ENCODE measurements at regions of chr17 and their contacts with region 1.

Region 1: DNA sequence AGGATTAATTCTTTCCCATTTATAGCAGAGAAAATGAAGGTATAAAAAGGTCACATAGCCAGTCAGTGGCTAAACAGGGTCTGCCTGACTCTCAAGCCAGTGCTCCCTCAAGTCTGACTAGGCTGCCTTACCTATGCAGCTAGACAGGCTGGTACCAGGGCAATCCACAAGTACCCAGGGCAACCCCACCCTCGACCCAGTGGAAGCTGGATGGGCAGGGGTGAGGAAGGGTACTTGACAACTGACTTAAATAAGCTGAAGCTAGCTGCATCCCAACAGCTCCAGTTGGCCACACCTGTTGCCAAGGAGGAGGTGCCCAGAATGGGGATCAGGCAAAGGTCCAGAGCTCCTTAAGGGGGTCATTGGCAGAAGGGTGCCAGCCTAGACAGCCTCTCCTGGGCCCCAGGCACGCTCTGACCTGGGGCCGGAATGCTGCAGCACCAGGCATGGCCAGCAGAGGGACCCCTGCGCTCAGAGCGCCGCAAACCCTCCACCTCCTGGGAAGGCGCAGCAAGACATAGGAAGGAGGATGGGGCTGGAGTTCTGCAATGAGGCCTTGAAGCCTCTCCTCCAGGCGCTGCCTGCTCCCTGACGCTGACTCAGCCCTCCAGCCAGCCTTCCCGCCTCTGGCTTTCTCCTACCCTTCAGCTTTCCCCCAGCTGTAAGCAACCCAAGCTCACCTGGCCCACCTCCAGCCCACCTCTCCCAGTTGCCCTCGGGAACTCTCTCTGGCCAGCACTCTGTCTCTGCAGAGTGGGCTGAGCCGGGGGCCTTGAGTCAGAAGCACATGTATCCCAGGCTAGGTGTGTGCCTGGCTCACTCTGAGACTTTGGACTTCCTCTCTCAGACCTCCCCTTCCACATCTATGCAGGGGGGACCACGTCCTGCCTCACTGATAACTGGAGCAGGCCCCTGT is 28.8 kb downstream of the MPP2 start:
- DNase-seq: peak; percentile 37
- H3K4me3 ChIP-seq: no peak overlapping the region
- H3K27me3 ChIP-seq: peaks cover 2% of the 10 kb centered on the region
- CTCF ChIP-seq: peak; percentile 99

Region 2: DNA sequence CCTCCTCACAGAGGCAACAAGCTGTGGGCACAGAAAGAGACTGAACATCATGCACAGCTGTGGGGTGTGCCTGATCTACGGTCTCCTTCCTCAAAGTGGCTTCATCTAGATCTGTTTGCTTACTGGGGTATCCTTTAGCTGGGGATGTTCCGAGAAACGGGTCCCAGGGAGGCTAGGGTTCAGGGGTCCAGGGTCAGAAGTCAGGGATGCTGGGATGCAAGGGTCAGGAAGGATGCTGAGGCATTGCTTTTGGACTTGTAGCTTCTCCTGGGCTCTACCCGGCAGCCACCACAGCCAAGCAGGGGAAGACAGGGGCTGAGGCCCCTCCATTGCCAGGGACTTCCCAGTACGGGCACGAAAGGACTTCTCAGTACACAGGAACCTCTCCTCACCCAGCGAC is 25.0 kb before region 1 on chr17:
- CTCF ChIA-PET with region 1: interaction called, 12 read pairs
- POLR2A ChIA-PET with region 1: no interaction called
- DNase-seq: no peak
- H3K4me3 ChIP-seq: no peak overlapping the region
- H3K27me3 ChIP-seq: peaks cover 43% of the 10 kb centered on the region
- CTCF ChIP-seq: no peak

Region 3: DNA sequence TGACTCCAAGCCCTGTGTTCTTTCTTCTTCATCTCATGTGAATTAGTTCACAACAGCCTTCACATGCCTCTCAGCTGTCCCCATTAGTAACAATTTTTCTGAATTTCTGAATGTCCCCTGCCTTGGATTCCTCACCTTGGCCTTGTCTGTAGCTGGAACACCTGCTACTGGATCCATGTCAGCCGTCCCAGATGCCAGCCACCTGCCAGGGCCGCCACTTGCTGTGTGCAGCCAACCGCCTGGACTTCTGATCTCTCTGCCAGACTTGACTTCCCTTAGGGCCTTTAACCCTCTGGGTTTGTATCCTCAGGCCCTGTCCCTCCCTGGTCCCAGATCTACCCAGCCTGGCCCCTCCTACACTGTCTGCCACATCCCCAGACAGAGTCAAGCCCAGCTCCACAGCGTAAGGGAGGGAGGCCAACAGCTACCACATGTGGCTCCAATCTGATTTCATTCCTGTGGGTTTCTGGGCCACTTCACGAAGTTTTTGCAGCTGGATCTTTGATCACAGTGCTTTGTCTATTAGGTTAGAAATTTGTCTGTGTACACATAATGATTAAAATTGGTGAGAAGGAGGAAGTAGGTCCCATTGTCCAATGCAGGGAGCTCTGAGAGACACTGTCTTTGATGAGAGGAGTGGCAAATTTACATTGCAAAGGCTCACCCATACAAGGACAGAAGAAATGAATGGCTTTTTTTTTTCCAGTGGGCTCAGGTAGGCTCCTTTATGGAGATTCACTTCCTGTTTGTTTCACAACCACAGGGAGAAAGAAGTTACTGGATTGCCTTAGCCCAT is 13.5 kb after region 1 on chr17:
- CTCF ChIA-PET with region 1: interaction called, 70 read pairs
- POLR2A ChIA-PET with region 1: no interaction called
- DNase-seq: no peak
- H3K4me3 ChIP-seq: no peak overlapping the region
- H3K27me3 ChIP-seq: peaks cover 4% of the 10 kb centered on the region
- CTCF ChIP-seq: no peak

Region 4: GRCh38 chr17:43907425-43907981 is 29.0 kb after region 1 on chr17 and contains the start of gene MPP2:
- CTCF ChIA-PET with region 1: interaction called, 59 read pairs
- POLR2A ChIA-PET with region 1: no interaction called
- DNase-seq: no peak
- H3K4me3 ChIP-seq: peak within 1 kb of the TSS; percentile 51
- H3K27me3 ChIP-seq: peaks cover 4% of the 10 kb centered on the region
- CTCF ChIP-seq: peak; percentile 41; the same call in 1 of the 2 replicates
- polyA plus RNA-seq, gene MPP2: 3.1 and 5.3 TPM in 2 replicates

Region 5: DNA sequence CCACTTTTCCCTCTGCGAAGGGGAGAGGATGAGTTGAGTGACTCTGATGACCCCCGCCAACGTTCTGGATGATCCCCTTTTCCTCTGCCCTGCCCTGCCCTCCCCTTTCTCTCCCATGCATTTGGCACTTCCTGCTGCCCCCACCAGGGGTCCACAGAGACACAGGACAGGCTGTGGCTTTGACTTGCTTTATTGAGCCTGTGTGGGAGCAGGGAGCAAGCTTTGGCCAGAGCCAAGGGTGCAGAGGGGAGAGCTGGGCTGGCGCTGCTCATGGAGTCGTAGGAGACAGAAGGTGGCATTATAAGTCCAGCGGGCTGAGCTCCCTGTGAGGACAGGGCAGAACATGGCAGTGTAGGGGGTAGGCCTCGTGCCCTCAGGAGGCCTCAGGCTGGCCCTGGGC is 62.1 kb after region 1 on chr17:
- CTCF ChIA-PET with region 1: interaction called, 30 read pairs
- POLR2A ChIA-PET with region 1: no interaction called
- DNase-seq: no peak
- H3K4me3 ChIP-seq: no peak overlapping the region
- H3K27me3 ChIP-seq: peaks cover 8% of the 10 kb centered on the region; the same call in 1 of the 2 replicates
- CTCF ChIP-seq: peak; percentile 73

Region 6: DNA sequence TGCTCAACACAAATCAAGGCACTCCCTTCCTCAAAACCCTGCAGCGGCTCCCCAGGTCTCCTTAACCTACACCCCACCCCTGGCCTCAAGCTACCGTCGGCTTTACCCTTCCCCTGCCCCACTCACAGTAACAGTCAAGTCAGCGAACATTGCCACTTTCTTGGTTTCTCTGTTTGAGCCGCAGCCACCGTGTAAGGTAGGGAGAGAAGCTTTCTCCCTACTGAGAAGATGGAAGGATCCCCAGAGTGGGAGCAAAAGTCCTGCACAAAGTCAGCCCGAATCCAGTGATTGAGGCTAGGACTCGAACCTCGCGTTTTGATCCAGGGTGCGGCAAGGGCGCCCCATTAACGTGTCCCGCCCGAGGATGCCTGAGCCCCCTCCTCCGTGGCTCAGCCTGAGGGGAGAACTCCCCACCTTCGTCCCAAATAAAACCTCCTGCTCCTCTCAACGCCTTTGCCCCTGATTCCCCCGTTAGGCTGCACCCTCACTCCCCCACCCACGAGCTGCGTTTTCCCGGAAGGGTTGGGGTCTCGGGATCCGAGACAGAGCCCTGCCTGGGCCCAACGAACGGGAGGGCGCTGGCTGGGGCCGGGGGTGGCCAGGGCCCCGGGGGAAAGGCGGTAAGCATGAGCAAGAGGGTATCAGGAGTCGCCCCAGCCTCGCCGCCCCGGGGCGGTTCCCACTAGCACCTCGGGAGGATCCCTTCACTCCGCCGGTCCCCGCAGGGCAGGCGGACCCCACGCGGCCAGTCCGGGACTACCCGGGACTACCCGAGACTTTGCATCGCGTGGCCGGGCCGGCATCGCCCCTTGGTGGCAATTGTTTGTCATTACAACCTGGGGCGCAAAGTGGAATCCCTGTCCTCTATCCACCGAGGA is 116.0 kb after region 1 on chr17:
- CTCF ChIA-PET with region 1: interaction called, 57 read pairs
- POLR2A ChIA-PET with region 1: no interaction called
- DNase-seq: no peak
- H3K4me3 ChIP-seq: peak overlapping the region; percentile 33
- H3K27me3 ChIP-seq: peaks cover 5% of the 10 kb centered on the region
- CTCF ChIP-seq: peak; percentile 89